GM12878 (cell line): ENCODE measurements at regions of chr9 and their contacts with region 1.

Region 1: GRCh38 chr9:113523421-113524236 is 60.1 kb downstream of the RGS3 start:
- DNase-seq: peak; percentile 85
- ATAC-seq: peak; percentile 75
- H3K4me3 ChIP-seq: peak overlapping the region; percentile 61
- H3K27ac ChIP-seq: peak overlapping the region; percentile 78
- H3K4me1 ChIP-seq: peaks cover 38% of the 10 kb centered on the region
- H3K27me3 ChIP-seq: no peaks in the 10 kb centered on the region
- CTCF ChIP-seq: no peak
- EP300 ChIP-seq: peak in 1 of 2 experiments; percentile 66; a peak in 3 of 4 replicates
- POLR2A ChIP-seq: 0 out of 2 replicates have a peak, but pooled peaks have one; percentile 30
- RAD21 ChIP-seq: no peak; the same call in 1 of the 2 replicates

Region 2: GRCh38 chr9:113446323-113446740 is 77.3 kb before region 1 on chr9:
- CTCF ChIA-PET with region 1: interaction called, 42 read pairs
- POLR2A ChIA-PET with region 1: interaction called, 6 read pairs
- RAD21 ChIA-PET with region 1: interaction called, 13 read pairs
- SMC1A ChIA-PET with region 1: interaction called, 43 read pairs
- in situ Hi-C with region 1: no loop called
- intact Hi-C with region 1: no loop called
- DNase-seq: peak; percentile 25
- ATAC-seq: peak; percentile 80
- H3K4me3 ChIP-seq: no peak overlapping the region
- H3K27ac ChIP-seq: no peak overlapping the region
- H3K4me1 ChIP-seq: no peaks in the 10 kb centered on the region
- H3K27me3 ChIP-seq: no peaks in the 10 kb centered on the region
- CTCF ChIP-seq: peak; percentile 42 to 69 (median 50); a peak in 5 of 6 replicates
- EP300 ChIP-seq: no peak
- POLR2A ChIP-seq: no peak
- RAD21 ChIP-seq: peak; percentile 81

Region 3: GRCh38 chr9:113454914-113455761 is 68.5 kb before region 1 on chr9:
- CTCF ChIA-PET with region 1: interaction called, 4 read pairs
- POLR2A ChIA-PET with region 1: interaction called, 3 read pairs
- RAD21 ChIA-PET with region 1: interaction called, 16 read pairs
- SMC1A ChIA-PET with region 1: interaction called, 17 read pairs
- in situ Hi-C with region 1: no loop called
- intact Hi-C with region 1: no loop called
- DNase-seq: no peak
- ATAC-seq: peak; percentile 71
- H3K4me3 ChIP-seq: no peak overlapping the region
- H3K27ac ChIP-seq: no peak overlapping the region
- H3K4me1 ChIP-seq: peaks cover 9% of the 10 kb centered on the region
- H3K27me3 ChIP-seq: no peaks in the 10 kb centered on the region
- CTCF ChIP-seq: no peak
- EP300 ChIP-seq: no peak
- POLR2A ChIP-seq: no peak
- RAD21 ChIP-seq: no peak

Region 4: DNA sequence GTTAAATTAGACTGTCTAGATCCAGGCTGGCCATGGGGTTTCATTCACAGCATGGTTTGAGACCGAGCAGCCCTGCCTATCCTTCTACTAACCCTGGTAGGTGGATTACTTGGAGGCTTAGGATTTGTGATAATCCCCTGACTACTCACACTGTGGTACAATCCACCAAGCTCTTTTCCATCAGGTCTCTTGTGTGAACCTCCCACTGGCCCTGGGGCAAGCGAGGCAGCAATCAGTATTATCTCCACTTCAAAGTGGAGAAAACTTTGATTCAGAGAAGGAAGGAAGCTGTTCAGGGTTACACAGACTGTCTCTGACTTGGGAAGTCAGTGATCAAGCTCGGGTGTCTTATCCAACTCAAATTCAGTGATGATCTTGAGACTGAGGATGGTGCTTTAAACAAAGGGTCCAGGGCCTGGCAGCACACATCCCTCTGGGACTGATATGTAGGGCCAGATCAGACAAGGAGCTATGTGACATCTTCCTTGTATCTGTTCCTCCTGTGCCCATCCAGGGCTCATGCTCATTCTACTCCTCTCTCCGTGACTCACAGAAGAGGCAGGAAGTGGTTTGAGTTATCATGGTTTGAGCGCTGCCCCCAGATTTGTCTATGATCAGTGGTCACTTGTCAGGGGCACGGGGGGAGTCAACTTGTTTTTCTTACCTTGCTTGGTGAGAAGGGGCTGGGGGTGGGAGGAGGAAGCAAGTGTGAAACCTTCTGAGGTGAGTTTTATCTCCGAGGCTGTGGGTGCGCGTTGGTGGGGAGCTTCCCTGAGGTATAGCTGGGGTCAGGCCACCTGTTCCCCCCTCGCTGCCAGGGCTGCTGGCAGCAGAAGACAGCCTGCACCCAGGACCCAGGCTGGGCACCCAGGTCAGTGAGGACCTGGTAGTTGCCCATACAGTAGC is 11.5 kb before region 1 on chr9:
- CTCF ChIA-PET with region 1: interaction called, 38 read pairs
- POLR2A ChIA-PET with region 1: interaction called, 26 read pairs
- RAD21 ChIA-PET with region 1: interaction called, 56 read pairs
- SMC1A ChIA-PET with region 1: interaction called, 71 read pairs
- in situ Hi-C with region 1: no loop called
- intact Hi-C with region 1: no loop called
- DNase-seq: peak; percentile 81
- ATAC-seq: peak; percentile 74
- H3K4me3 ChIP-seq: peak overlapping the region; percentile 42; the same call in 1 of the 2 replicates
- H3K27ac ChIP-seq: peak overlapping the region; percentile 68
- H3K4me1 ChIP-seq: peaks cover 41% of the 10 kb centered on the region
- H3K27me3 ChIP-seq: no peaks in the 10 kb centered on the region
- CTCF ChIP-seq: no peak
- EP300 ChIP-seq: peak; percentile 7 to 84; a peak in 2 of 4 replicates
- POLR2A ChIP-seq: no peak
- RAD21 ChIP-seq: no peak

Region 5: GRCh38 chr9:113546566-113546965 is 22.9 kb after region 1 on chr9:
- CTCF ChIA-PET with region 1: interaction called, 3 read pairs
- POLR2A ChIA-PET with region 1: no interaction called
- RAD21 ChIA-PET with region 1: no interaction called
- SMC1A ChIA-PET with region 1: interaction called, 17 read pairs
- in situ Hi-C with region 1: no loop called
- intact Hi-C with region 1: no loop called
- DNase-seq: no peak
- ATAC-seq: no peak
- H3K4me3 ChIP-seq: no peak overlapping the region
- H3K27ac ChIP-seq: no peak overlapping the region
- H3K4me1 ChIP-seq: peaks cover 6% of the 10 kb centered on the region
- H3K27me3 ChIP-seq: no peaks in the 10 kb centered on the region
- CTCF ChIP-seq: no peak
- EP300 ChIP-seq: no peak
- POLR2A ChIP-seq: no peak
- RAD21 ChIP-seq: no peak

Region 6: GRCh38 chr9:113564498-113565237 is 41.0 kb after region 1 on chr9:
- CTCF ChIA-PET with region 1: interaction called, 5 read pairs
- POLR2A ChIA-PET with region 1: interaction called, 20 read pairs
- RAD21 ChIA-PET with region 1: interaction called, 481 read pairs
- SMC1A ChIA-PET with region 1: interaction called, 23 read pairs
- in situ Hi-C with region 1: no loop called
- intact Hi-C with region 1: no loop called
- DNase-seq: no peak
- ATAC-seq: peak; percentile 6
- H3K4me3 ChIP-seq: no peak overlapping the region
- H3K27ac ChIP-seq: no peak overlapping the region
- H3K4me1 ChIP-seq: peaks cover 17% of the 10 kb centered on the region
- H3K27me3 ChIP-seq: no peaks in the 10 kb centered on the region
- CTCF ChIP-seq: no peak
- EP300 ChIP-seq: no peak
- POLR2A ChIP-seq: no peak
- RAD21 ChIP-seq: no peak

Region 7: DNA sequence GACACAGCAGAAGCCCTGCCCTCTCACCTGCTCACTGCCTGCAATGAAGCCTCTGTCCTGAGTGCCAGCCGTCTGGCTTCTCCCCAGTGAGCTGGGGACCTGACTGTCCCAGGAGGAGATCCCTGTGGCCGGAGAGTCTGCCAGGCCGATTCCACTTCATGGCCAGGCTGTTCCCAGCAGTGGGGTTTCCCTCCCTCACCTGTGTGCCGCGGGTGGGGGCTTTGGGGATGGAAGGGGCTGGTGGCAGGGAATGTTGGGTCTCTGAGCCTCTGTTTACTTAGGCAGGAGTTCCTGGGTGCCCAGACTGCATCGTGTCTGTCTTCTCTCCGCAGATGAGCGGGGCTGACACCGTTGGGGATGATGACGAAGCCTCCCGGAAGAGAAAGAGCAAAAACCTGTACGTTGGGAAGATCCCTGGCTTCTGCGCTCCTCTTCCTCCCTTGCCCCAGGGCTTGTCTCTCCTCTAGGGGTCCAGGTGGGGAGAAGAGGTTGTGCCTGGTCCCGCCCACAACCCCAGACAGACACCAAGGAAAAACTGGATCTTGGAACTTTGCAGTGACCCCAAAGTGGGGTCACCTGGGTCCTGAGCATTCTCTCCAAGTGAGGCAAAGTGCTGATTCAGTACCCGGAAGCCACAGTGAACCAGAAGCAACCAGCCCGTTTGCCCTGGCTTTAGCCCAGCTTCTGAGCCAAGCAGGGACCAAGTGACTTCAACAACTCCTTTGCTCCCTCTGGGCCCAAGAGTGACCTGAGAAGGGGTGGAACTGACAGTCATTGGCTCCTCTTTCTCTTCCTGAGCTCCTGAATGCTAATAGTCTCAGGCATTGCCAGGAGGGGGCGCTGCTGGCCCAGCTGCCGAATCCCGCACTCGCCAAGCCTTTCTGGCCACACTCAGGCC is 67.6 kb after region 1 on chr9:
- CTCF ChIA-PET with region 1: interaction called, 48 read pairs
- POLR2A ChIA-PET with region 1: interaction called, 5 read pairs
- RAD21 ChIA-PET with region 1: interaction called, 9 read pairs
- SMC1A ChIA-PET with region 1: interaction called, 19 read pairs
- in situ Hi-C with region 1: no loop called
- intact Hi-C with region 1: no loop called
- DNase-seq: no peak
- ATAC-seq: peak; percentile 72
- H3K4me3 ChIP-seq: no peak overlapping the region
- H3K27ac ChIP-seq: no peak overlapping the region
- H3K4me1 ChIP-seq: peaks cover 29% of the 10 kb centered on the region
- H3K27me3 ChIP-seq: no peaks in the 10 kb centered on the region
- CTCF ChIP-seq: peak; percentile 87 to 93 (median 92)
- EP300 ChIP-seq: no peak
- POLR2A ChIP-seq: no peak
- RAD21 ChIP-seq: peak; percentile 85

Region 8: DNA sequence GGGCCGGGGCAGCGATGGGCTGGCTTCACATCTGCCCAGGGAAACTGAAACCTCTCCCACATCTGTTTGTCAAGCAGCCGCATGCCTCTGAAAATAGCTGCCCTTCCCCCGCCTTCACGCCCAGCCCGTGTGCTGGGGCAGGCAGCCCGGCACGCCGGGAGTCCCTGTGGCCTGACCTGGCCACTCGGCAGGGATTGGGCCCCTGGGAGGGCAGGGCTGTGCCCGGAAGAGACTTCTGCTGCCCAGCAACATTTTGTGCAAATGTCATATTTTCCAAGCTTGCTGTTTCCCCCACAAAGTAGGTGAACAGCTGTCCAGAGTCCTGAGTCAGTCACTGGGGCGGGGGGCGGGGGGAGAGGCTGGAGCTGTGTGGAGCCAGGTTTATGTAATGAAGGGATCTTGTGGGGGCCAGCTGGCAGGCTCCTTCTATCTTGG is 639.9 kb after region 1 on chr9:
- CTCF ChIA-PET with region 1: no interaction called
- POLR2A ChIA-PET with region 1: no interaction called
- RAD21 ChIA-PET with region 1: no interaction called
- SMC1A ChIA-PET with region 1: no interaction called
- in situ Hi-C with region 1: no loop called
- intact Hi-C with region 1: no loop called
- DNase-seq: no peak
- ATAC-seq: no peak
- H3K4me3 ChIP-seq: no peak overlapping the region
- H3K27ac ChIP-seq: no peak overlapping the region
- H3K4me1 ChIP-seq: no peaks in the 10 kb centered on the region
- H3K27me3 ChIP-seq: no peaks in the 10 kb centered on the region; a peak in 3 of 4 replicates
- CTCF ChIP-seq: no peak
- EP300 ChIP-seq: no peak
- POLR2A ChIP-seq: no peak
- RAD21 ChIP-seq: no peak